ENCODE measurements at regions of chr1 and their contacts with region 1.

Region 1: GRCh38 chr1:149886396-149887195 is 12.8 kb upstream of the BOLA1 start:
- DNase-seq: peak; percentile 100
- H3K4me3 Mint-ChIP-seq: no peak overlapping the region
- H3K27ac Mint-ChIP-seq: no peak overlapping the region
- H3K4me1 Mint-ChIP-seq: no peaks in the 10 kb centered on the region
- H3K27me3 Mint-ChIP-seq: no peaks in the 10 kb centered on the region
- CTCF ChIP-seq: no peak

Region 2: DNA sequence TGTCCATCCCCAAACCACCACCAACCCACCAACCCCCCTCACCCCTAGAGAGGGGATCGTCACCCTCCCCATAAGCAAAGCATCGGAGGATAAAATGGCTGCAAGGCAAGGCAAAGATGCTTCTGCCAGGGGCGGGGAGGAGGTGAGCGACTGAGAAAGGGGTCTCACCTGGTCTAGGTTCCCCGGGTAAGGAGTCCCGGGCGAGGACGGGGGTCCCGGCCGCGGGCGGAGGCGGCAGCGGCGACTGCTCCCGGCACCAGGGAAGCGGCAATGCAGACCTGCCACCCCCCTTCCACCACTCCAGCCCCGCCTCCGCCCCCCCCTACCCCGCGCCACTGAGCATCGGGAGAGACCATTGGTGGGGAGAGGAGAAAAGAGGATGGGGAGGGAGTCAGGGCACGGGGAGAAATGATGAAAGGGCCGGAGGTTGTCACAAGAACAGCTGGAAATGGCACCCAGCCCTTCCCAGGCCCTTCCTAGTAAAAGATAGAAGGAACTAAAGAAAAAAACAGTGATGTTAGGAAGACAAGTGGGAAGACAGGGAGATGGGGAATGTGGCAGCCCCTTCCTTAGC is 31.1 kb after region 1 on chr1 and contains the start of gene SV2A:
- CTCF ChIA-PET with region 1: no interaction called
- POLR2A ChIA-PET with region 1: interaction called, 20 read pairs
- intact Hi-C with region 1: no loop called
- DNase-seq: no peak
- H3K4me3 Mint-ChIP-seq: no peak within 1 kb of the TSS
- H3K27ac Mint-ChIP-seq: no peak within 1 kb of the TSS
- H3K4me1 Mint-ChIP-seq: peaks cover 12% of the 10 kb centered on the region
- H3K27me3 Mint-ChIP-seq: peaks cover 10% of the 10 kb centered on the region
- CTCF ChIP-seq: no peak
- total RNA-seq, gene SV2A: 0.12 TPM in 1 of 2 replicates, not detected in the other

Region 3: DNA sequence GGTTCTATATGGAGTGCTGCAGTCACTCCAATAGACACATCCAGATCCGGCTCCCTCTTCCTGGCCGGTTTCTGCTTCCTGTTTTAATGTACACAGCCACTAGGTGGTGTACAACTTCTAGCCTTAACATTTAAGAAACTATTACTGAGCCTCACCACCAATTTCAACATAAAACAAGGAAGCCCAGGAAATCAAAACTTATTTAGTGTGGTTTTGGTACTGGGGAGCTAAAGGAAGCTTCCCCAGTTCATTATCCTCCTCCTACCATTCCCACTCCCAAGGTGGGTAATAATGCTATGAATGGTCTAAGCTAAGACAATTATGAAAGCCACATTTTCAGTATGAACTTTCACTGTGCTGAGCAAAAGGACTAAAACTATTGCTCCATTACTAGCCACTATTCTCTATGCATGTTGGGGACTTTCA is 75.5 kb after region 1 on chr1:
- CTCF ChIA-PET with region 1: interaction called, 6 read pairs
- POLR2A ChIA-PET with region 1: interaction called, 23 read pairs
- intact Hi-C with region 1: loop called (anchors 2 kb)
- DNase-seq: peak; percentile 85
- H3K4me3 Mint-ChIP-seq: no peak overlapping the region
- H3K27ac Mint-ChIP-seq: peak overlapping the region; percentile 33
- H3K4me1 Mint-ChIP-seq: peaks cover 22% of the 10 kb centered on the region
- H3K27me3 Mint-ChIP-seq: no peaks in the 10 kb centered on the region
- CTCF ChIP-seq: peak; percentile 88

Region 4: GRCh38 chr1:150010393-150011115 is 124.0 kb after region 1 on chr1 and contains the start of gene OTUD7B:
- CTCF ChIA-PET with region 1: interaction called, 4 read pairs
- POLR2A ChIA-PET with region 1: interaction called, 231 read pairs
- intact Hi-C with region 1: no loop called
- DNase-seq: peak; percentile 91
- H3K4me3 Mint-ChIP-seq: peak within 1 kb of the TSS; percentile 95
- H3K27ac Mint-ChIP-seq: peak within 1 kb of the TSS; percentile 95
- H3K4me1 Mint-ChIP-seq: peaks cover 29% of the 10 kb centered on the region
- H3K27me3 Mint-ChIP-seq: no peaks in the 10 kb centered on the region
- CTCF ChIP-seq: no peak
- total RNA-seq, gene OTUD7B: 44.3 and 47.4 TPM in 2 replicates

Region 5: GRCh38 chr1:150067184-150068036 is 180.8 kb after region 1 on chr1 and contains the start of gene VPS45:
- CTCF ChIA-PET with region 1: interaction called, 5 read pairs
- POLR2A ChIA-PET with region 1: interaction called, 152 read pairs
- intact Hi-C with region 1: no loop called
- DNase-seq: peak; percentile 95
- H3K4me3 Mint-ChIP-seq: peak within 1 kb of the TSS; percentile 91
- H3K27ac Mint-ChIP-seq: peak within 1 kb of the TSS; percentile 87
- H3K4me1 Mint-ChIP-seq: peaks cover 33% of the 10 kb centered on the region
- H3K27me3 Mint-ChIP-seq: no peaks in the 10 kb centered on the region
- CTCF ChIP-seq: no peak
- total RNA-seq, gene VPS45: 35.1 and 55.1 TPM in 2 replicates

Region 6: DNA sequence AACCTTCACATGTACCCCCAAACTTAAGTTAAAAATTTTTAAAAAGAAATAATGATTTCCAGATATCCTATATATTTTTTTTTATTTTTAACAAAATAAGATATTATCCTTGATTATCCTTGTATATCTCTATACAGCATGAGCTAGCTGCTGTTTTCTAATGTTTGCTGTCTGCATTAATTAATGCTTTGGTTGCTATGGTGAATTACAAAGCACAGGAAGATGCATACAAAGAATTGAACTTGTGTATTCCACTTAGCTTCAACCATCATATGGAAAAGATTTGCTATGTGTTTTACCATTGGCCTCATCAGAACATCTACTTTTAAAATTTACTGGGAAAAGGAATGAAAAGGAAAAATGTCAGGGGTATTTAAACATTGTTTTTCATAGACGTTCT is 216.4 kb after region 1 on chr1:
- CTCF ChIA-PET with region 1: no interaction called
- POLR2A ChIA-PET with region 1: no interaction called
- intact Hi-C with region 1: no loop called
- DNase-seq: no peak
- H3K4me3 Mint-ChIP-seq: no peak overlapping the region
- H3K27ac Mint-ChIP-seq: no peak overlapping the region
- H3K4me1 Mint-ChIP-seq: no peaks in the 10 kb centered on the region
- H3K27me3 Mint-ChIP-seq: no peaks in the 10 kb centered on the region
- CTCF ChIP-seq: no peak

Region 7: GRCh38 chr1:150132372-150132771 is 245.8 kb after region 1 on chr1:
- CTCF ChIA-PET with region 1: no interaction called
- POLR2A ChIA-PET with region 1: no interaction called
- intact Hi-C with region 1: no loop called
- DNase-seq: no peak
- H3K4me3 Mint-ChIP-seq: no peak overlapping the region
- H3K27ac Mint-ChIP-seq: no peak overlapping the region
- H3K4me1 Mint-ChIP-seq: no peaks in the 10 kb centered on the region
- H3K27me3 Mint-ChIP-seq: no peaks in the 10 kb centered on the region
- CTCF ChIP-seq: no peak

Region 8: GRCh38 chr1:150235852-150236613 is 349.4 kb after region 1 on chr1 and contains the start of gene ANP32E:
- CTCF ChIA-PET with region 1: no interaction called
- POLR2A ChIA-PET with region 1: interaction called, 22 read pairs
- intact Hi-C with region 1: no loop called
- DNase-seq: peak; percentile 100
- H3K4me3 Mint-ChIP-seq: no peak within 1 kb of the TSS
- H3K27ac Mint-ChIP-seq: no peak within 1 kb of the TSS
- H3K4me1 Mint-ChIP-seq: peaks cover 11% of the 10 kb centered on the region
- H3K27me3 Mint-ChIP-seq: no peaks in the 10 kb centered on the region
- CTCF ChIP-seq: no peak
- total RNA-seq, gene ANP32E: 56.5 and 67.3 TPM in 2 replicates

Region 9: GRCh38 chr1:150397402-150398032 is 510.9 kb after region 1 on chr1:
- CTCF ChIA-PET with region 1: no interaction called
- POLR2A ChIA-PET with region 1: no interaction called
- intact Hi-C with region 1: no loop called
- DNase-seq: no peak
- H3K4me3 Mint-ChIP-seq: no peak overlapping the region
- H3K27ac Mint-ChIP-seq: no peak overlapping the region
- H3K4me1 Mint-ChIP-seq: peaks cover 6% of the 10 kb centered on the region
- H3K27me3 Mint-ChIP-seq: no peaks in the 10 kb centered on the region
- CTCF ChIP-seq: no peak

Measured in MCF 10A (cell line).